ENCODE measurements at regions of chr1 and their contacts with region 1.

Region 1: GRCh38 chr1:17053685-17054410 is at the start of gene SDHB:
- DNase-seq: peak; percentile 99
- H3K4me3 Mint-ChIP-seq: peak within 1 kb of the TSS; percentile 99
- H3K27ac Mint-ChIP-seq: peak within 1 kb of the TSS; percentile 93
- H3K4me1 Mint-ChIP-seq: peaks cover 12% of the 10 kb centered on the region
- H3K27me3 Mint-ChIP-seq: peaks cover 7% of the 10 kb centered on the region
- total RNA-seq, gene SDHB: 117 and 124 TPM in 2 replicates

Region 2: DNA sequence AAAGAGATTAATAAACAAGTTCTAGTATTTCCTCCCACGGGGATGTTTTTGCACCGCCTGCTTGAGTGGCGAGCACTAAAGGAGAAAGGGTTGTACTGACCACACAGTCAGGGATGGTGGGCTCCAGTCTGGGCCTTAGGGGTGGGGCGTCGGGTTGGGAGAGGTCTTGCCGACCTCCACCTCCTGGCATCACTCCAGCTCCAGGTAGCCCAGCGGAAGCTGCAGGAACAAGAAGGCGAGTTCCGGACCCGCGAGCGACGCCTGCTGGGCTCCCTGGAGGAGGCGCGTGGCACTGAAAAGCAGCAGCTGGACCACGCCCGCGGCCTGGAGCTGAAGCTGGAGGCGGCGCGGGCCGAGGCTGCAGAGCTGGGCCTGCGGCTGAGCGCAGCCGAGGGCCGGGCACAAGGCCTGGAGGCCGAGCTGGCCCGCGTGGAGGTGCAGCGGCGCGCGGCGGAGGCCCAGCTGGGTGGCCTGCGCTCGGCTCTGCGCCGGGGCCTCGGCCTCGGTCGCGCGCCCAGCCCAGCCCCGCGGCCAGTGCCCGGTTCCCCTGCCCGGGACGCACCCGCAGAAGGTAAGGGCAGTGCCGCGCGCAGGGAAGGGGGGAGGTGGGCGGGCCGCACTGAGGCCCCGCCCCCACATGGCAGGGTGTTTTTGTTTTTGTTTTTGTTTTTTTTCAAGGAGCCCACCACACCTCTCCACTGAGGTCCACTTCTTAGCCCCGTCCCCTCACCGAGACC is 93.1 kb before region 1 on chr1:
- intact Hi-C with region 1: loop called (anchors 2 kb)
- DNase-seq: peak; percentile 76
- H3K4me3 Mint-ChIP-seq: peak overlapping the region; percentile 69
- H3K27ac Mint-ChIP-seq: no peak overlapping the region
- H3K4me1 Mint-ChIP-seq: peaks cover 9% of the 10 kb centered on the region
- H3K27me3 Mint-ChIP-seq: no peaks in the 10 kb centered on the region

Region 3: DNA sequence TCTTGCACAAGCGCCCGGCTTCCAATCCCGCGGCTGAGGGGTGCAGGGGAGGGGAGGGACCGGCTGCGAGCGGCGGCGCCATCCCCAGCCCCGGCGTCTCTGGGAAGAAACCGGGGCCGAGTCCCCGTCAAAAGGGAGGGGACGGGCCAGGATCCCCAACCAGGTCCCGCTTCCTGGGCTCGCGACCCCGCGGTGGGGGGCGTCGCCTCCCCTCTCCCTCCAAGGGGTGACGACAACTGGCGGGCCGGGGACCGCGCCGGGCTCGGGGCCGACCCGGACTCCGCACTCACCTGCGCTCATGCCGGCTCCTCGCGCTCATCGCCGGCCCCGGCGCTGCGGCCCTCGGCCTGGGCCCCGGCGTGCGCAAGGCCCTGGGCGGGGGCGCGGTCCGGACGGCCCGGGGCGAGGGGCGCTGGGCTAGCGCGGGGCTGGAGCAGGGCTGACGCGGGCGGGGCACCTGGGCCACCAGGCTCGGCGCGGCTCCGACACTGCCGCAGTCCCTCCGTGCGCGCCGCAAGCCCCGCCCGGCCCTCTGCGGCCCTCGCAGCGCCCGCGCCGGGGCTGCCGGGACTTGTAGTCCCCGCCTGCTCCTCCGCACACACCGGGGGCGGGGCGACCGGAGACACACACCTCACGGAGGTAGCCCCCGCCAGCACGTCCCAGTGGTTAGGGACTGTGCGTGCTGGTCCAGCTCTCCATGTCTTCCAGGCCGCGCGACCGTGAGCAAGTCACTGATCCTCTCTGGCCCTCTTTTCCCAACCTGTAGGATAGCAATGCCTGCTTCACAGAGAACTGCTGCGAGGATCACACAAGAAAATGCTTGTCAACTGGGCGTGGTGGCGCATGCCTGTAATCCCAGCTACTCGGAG is 42.2 kb before region 1 on chr1 and contains the start of gene ATP13A2:
- intact Hi-C with region 1: loop called (anchors 1 kb)
- DNase-seq: peak; percentile 77
- H3K4me3 Mint-ChIP-seq: peak within 1 kb of the TSS; percentile 80
- H3K27ac Mint-ChIP-seq: no peak within 1 kb of the TSS
- H3K4me1 Mint-ChIP-seq: peaks cover 17% of the 10 kb centered on the region
- H3K27me3 Mint-ChIP-seq: no peaks in the 10 kb centered on the region
- total RNA-seq, gene ATP13A2: 47.6 and 50.2 TPM in 2 replicates

Region 4: GRCh38 chr1:17098446-17099251 is 44.8 kb after region 1 on chr1:
- intact Hi-C with region 1: no loop called
- DNase-seq: no peak
- H3K4me3 Mint-ChIP-seq: no peak overlapping the region
- H3K27ac Mint-ChIP-seq: no peak overlapping the region
- H3K4me1 Mint-ChIP-seq: no peaks in the 10 kb centered on the region
- H3K27me3 Mint-ChIP-seq: peaks cover 2% of the 10 kb centered on the region

Region 5: GRCh38 chr1:17439250-17440073 is 385.6 kb after region 1 on chr1 and contains the start of gene RCC2:
- intact Hi-C with region 1: loop called (anchors 5 kb)
- DNase-seq: peak; percentile 69
- H3K4me3 Mint-ChIP-seq: peak within 1 kb of the TSS; percentile 97
- H3K27ac Mint-ChIP-seq: peak within 1 kb of the TSS; percentile 98
- H3K4me1 Mint-ChIP-seq: peaks cover 37% of the 10 kb centered on the region
- H3K27me3 Mint-ChIP-seq: no peaks in the 10 kb centered on the region
- total RNA-seq, gene RCC2: 202 and 203 TPM in 2 replicates